OCI-LY7 (cell line): ENCODE measurements at regions of chr3 and their contacts with region 1.

Region 1: GRCh38 chr3:183555541-183556081 is at the start of gene KLHL6:
- DNase-seq: peak; percentile 93
- H3K4me3 ChIP-seq: peak within 1 kb of the TSS; percentile 97
- H3K27ac ChIP-seq: peak within 1 kb of the TSS; percentile 96
- H3K4me1 ChIP-seq: peaks cover 41% of the 10 kb centered on the region
- CTCF ChIP-seq: no peak
- total RNA-seq, gene KLHL6: 143 TPM in 2 replicates

Region 2: GRCh38 chr3:183073839-183074238 is 481.8 kb before region 1 on chr3:
- CTCF ChIA-PET with region 1: no interaction called
- POLR2A ChIA-PET with region 1: no interaction called
- intact Hi-C with region 1: no loop called
- DNase-seq: no peak
- H3K4me3 ChIP-seq: no peak overlapping the region
- H3K27ac ChIP-seq: no peak overlapping the region
- H3K4me1 ChIP-seq: no peaks in the 10 kb centered on the region
- CTCF ChIP-seq: no peak

Region 3: GRCh38 chr3:183468424-183468823 is 87.2 kb before region 1 on chr3:
- CTCF ChIA-PET with region 1: interaction called, 3 read pairs
- POLR2A ChIA-PET with region 1: no interaction called
- intact Hi-C with region 1: loop called (anchors 1 kb)
- DNase-seq: no peak
- H3K4me3 ChIP-seq: no peak overlapping the region
- H3K27ac ChIP-seq: no peak overlapping the region
- H3K4me1 ChIP-seq: peaks cover 28% of the 10 kb centered on the region
- CTCF ChIP-seq: no peak

Region 4: DNA sequence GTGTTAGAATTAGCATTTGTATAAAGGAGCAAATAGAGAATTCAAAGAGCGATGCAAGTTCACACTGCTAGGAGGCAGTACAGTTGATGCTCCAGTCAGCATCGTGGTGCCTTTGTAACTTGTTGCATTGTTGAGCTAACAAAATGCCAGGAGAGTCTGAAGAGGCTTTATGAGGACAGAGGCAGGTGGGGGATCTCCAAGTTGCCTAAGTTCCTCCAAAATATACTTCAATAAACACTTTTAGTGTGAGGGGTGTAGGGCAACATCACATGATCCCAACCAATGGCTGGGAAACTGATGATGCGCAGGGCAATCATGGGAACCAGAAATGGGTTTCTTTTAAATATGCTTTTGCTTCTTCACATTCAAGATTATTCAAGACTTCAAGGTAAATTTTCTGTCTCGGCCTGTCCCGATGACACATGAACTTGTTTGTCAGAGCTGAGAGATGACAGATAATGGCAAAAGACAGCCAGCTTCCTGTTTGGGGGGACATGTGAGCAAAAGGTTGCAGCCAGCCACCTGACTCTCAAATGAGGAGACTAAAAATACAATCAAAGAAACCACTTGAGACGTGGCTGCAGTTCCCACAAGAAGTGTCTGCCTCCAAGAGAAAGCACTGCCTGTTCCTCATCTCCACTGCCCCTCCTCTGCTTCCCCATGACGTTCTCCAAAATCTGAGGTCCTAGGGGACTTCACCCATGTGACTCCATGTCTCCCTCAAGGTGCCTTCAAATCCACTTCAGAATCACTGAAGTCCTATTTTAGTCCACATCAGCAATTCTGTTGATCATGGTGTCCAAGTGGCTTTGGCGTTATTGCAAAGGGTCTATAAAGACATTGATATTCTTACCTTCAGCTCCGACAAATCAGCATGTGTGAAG is 39.4 kb before region 1 on chr3:
- CTCF ChIA-PET with region 1: interaction called, 3 read pairs
- POLR2A ChIA-PET with region 1: interaction called, 47 read pairs
- intact Hi-C with region 1: loop called (anchors 1 kb)
- DNase-seq: peak; percentile 93
- H3K4me3 ChIP-seq: peak overlapping the region; percentile 51
- H3K27ac ChIP-seq: peak overlapping the region; percentile 94
- H3K4me1 ChIP-seq: peaks cover 99% of the 10 kb centered on the region
- CTCF ChIP-seq: peak; percentile 84

Region 5: GRCh38 chr3:183576487-183577107 is 21.0 kb after region 1 on chr3:
- CTCF ChIA-PET with region 1: interaction called, 4 read pairs
- POLR2A ChIA-PET with region 1: interaction called, 54 read pairs
- intact Hi-C with region 1: loop called (anchors 2 kb)
- DNase-seq: peak; percentile 97
- H3K4me3 ChIP-seq: peak overlapping the region; percentile 47
- H3K27ac ChIP-seq: peak overlapping the region; percentile 94
- H3K4me1 ChIP-seq: peaks cover 96% of the 10 kb centered on the region
- CTCF ChIP-seq: no peak

Region 6: DNA sequence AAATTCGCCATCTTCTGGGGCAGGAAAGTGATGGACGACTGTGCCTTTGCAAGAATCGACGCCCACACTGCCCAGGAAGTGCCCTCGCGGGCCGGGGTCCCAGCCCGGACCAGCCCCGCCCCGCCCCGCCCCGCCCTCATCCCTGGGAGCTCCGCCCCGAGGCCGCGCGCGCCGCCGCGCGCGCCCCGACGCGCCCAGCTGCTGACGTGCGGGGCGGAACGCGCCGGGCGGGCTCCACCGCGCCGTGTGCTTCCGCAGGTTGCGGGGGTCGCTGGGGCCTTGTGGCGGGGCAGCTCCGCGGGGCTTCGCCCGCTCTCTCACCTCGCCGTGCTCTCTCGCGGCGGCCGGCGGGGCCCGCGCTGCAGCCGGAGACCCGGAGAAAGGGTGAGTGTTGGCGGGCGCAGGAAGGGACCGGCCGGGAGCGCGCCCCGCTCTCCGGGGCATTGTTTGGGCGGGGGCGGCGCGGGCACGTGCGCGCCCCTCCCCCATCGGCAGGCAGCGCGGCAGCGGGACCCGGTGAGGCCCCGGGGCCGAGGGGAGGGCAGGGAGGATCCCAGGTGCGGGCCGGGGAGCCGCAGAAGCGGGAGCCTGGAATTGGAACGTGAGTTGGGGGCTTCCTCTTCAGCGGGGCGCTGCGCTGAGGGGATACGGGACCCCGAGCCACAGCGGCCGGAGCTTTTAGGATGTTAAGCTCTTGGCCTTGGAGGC is 142.2 kb after region 1 on chr3 and contains the start of gene YEATS2:
- CTCF ChIA-PET with region 1: no interaction called
- POLR2A ChIA-PET with region 1: interaction called, 3 read pairs
- intact Hi-C with region 1: loop called (anchors 1 kb)
- DNase-seq: peak; percentile 86
- H3K4me3 ChIP-seq: peak within 1 kb of the TSS; percentile 96
- H3K27ac ChIP-seq: peak within 1 kb of the TSS; percentile 83
- H3K4me1 ChIP-seq: peaks cover 17% of the 10 kb centered on the region
- CTCF ChIP-seq: no peak
- total RNA-seq, gene YEATS2: 50.7 and 68.2 TPM in 2 replicates

Region 7: DNA sequence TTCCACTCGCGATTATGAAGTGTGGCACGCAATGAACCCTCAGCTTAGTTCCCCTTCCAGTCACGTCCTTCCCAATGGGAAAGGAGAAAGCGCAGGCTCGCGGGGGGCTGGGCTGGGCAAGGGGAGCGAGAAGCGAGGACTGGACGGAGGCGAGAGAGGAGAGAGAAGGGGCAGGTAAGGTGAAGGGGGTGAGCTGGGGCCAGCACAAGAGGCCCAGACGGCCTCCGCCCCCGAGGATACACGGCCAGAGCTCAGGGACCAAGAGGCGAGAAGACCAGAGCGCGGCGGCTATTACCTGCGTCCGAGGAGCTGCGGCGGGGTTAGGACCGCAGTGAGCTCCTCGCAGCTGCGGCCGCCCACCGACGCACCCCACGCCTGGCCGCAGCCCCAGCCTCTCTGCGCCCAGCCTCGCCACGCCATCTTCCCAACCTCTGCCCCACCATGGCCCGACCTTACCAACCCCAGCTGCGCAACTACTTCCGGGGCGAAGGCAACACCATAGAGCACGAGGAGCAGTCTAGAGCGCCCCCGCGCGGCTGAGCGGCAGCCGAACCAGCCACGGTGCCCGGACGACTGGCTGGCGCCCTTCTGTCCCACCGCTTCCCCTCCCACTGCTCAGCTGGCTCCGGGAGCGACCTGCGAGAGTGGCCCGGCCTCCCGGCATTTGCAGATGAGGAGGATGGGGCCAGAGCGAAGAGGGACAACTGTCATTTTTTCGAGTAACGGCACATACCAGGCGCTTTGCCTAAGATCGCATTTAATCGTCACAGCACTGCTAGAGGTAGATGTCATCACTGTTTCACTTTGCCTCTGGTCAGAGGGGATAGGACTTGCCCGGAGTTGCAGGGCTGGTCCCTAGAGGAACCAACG is 329.1 kb after region 1 on chr3 and contains the start of gene PARL:
- CTCF ChIA-PET with region 1: no interaction called
- POLR2A ChIA-PET with region 1: no interaction called
- intact Hi-C with region 1: loop called (anchors 10 kb)
- DNase-seq: peak; percentile 95
- H3K4me3 ChIP-seq: peak within 1 kb of the TSS; percentile 76
- H3K27ac ChIP-seq: peak within 1 kb of the TSS; percentile 47
- H3K4me1 ChIP-seq: peaks cover 19% of the 10 kb centered on the region
- CTCF ChIP-seq: peak; percentile 86
- total RNA-seq, gene PARL: 43.5 and 46.1 TPM in 2 replicates

Region 8: DNA sequence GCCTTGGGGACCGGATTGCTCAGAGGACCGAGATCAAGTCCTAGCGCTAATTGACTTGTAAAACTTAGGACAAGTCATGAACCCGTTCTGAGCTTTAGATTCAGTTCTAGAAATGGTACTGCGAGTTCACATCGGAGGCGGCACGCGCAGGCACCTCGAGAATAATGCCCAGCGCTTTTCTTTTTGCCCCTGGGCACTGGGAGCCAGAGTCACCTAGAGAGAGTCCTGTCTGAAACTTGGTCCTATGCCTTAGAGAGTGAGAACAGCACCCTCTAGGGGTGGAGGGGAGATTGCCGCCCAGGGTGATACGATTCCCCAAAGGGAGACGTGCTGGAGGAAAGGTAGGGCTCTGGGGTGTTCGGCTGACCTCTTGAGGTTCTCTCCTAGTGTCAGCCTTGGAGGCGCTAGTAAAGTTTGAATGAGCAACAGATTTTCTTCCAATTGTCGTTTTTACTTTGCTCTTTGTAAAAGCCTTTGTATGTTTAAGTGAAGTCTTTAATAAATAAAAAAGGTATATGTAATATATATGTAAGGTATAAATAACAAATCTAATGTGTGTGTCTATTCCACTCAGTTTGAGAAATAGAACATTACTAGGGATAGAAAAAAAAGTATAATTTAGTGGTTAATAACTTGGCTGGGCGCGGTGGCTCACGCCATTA is 694.7 kb after region 1 on chr3:
- CTCF ChIA-PET with region 1: no interaction called
- POLR2A ChIA-PET with region 1: no interaction called
- intact Hi-C with region 1: no loop called
- DNase-seq: peak; percentile 94
- H3K4me3 ChIP-seq: peak overlapping the region; percentile 81
- H3K27ac ChIP-seq: peak overlapping the region; percentile 83
- H3K4me1 ChIP-seq: peaks cover 8% of the 10 kb centered on the region
- CTCF ChIP-seq: peak; percentile 96